MCF 10A (cell line): ENCODE measurements at regions of chr6 and their contacts with region 1.

Region 1: GRCh38 chr6:28863604-28864320 is 60.0 kb downstream of the TRIM27 start:
- DNase-seq: peak; percentile 81
- H3K4me3 Mint-ChIP-seq: peak overlapping the region; percentile 93
- H3K27ac Mint-ChIP-seq: peak overlapping the region; percentile 53
- H3K4me1 Mint-ChIP-seq: peaks cover 14% of the 10 kb centered on the region
- H3K27me3 Mint-ChIP-seq: no peaks in the 10 kb centered on the region
- CTCF ChIP-seq: peak; percentile 7

Region 2: GRCh38 chr6:28880894-28881780 is 17.4 kb after region 1 on chr6:
- CTCF ChIA-PET with region 1: interaction called, 4 read pairs
- POLR2A ChIA-PET with region 1: interaction called, 4 read pairs
- intact Hi-C with region 1: loop called (anchors 1 kb)
- DNase-seq: peak; percentile 78
- H3K4me3 Mint-ChIP-seq: peak overlapping the region; percentile 86
- H3K27ac Mint-ChIP-seq: peak overlapping the region; percentile 8
- H3K4me1 Mint-ChIP-seq: peaks cover 6% of the 10 kb centered on the region
- H3K27me3 Mint-ChIP-seq: peaks cover 21% of the 10 kb centered on the region
- CTCF ChIP-seq: no peak

Region 3: GRCh38 chr6:28923318-28924102 is 59.7 kb after region 1 on chr6 and contains the start of gene TRIM27:
- CTCF ChIA-PET with region 1: interaction called, 3 read pairs
- POLR2A ChIA-PET with region 1: interaction called, 31 read pairs
- intact Hi-C with region 1: no loop called
- DNase-seq: peak; percentile 92
- H3K4me3 Mint-ChIP-seq: peak within 1 kb of the TSS; percentile 93
- H3K27ac Mint-ChIP-seq: peak within 1 kb of the TSS; percentile 88
- H3K4me1 Mint-ChIP-seq: peaks cover 19% of the 10 kb centered on the region
- H3K27me3 Mint-ChIP-seq: no peaks in the 10 kb centered on the region
- CTCF ChIP-seq: no peak
- total RNA-seq, gene TRIM27: 68.8 and 68.9 TPM in 2 replicates